Gastrocnemius medialis (tissue), 4 donors: ENCODE measurements at regions of chr5 and their contacts with region 1.

Region 1: DNA sequence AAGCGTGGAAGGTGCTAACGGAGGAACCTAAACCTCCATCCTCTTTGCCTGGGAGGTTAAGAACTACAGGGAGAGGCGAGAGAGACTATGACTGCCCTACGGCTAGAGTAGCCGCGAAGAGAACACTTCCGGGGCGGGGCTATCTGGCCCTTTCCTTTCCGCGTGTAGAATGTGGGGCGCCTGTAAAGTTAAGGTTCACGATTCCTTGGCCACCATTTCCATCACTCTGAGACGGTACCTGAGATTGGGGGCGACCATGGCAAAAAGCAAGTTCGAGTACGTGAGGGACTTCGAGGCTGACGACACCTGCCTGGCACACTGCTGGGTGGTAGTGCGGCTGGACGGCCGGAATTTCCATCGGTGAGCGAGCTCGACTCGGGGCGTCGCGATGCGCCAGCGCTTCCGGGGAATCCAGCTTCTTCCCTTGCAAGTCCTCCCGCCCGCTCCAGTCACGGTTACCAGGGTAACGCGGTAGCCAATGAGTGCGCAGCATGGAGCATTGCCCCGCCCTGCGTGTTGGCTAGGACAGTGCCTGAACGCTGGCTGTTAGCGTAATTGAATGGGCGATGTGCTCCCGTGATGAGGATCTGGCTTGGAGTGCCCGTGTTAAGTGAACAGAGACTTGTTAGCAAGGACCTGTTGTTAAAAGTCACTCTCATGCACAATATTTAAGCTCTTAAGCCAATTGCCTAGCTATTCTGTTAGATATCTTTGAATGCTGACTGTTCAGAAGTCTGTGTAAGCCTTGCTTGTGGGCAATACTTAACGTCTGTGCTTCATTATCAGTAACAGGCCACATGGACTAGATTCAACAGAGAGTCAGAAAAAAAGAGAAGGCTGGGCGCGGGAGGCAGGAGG is at the start of gene THG1L:
- DNase-seq: peak; percentile 96 to 97
- ATAC-seq: peak; percentile 99
- H3K4me3 ChIP-seq: peak within 1 kb of the TSS; percentile 71 to 97 (median 89)
- H3K27ac ChIP-seq: peak within 1 kb of the TSS; percentile 83 to 97 (median 94)
- H3K4me1 ChIP-seq: peaks cover 0 to 6% of the 10 kb centered on the region in 2 donors
- H3K27me3 ChIP-seq: no peaks in the 10 kb centered on the region
- CTCF ChIP-seq: no peak
- POLR2A ChIP-seq: peak; percentile 35 to 43
- total RNA-seq, gene THG1L: 3.5 to 9.7 (median 6.6) TPM

Region 2: DNA sequence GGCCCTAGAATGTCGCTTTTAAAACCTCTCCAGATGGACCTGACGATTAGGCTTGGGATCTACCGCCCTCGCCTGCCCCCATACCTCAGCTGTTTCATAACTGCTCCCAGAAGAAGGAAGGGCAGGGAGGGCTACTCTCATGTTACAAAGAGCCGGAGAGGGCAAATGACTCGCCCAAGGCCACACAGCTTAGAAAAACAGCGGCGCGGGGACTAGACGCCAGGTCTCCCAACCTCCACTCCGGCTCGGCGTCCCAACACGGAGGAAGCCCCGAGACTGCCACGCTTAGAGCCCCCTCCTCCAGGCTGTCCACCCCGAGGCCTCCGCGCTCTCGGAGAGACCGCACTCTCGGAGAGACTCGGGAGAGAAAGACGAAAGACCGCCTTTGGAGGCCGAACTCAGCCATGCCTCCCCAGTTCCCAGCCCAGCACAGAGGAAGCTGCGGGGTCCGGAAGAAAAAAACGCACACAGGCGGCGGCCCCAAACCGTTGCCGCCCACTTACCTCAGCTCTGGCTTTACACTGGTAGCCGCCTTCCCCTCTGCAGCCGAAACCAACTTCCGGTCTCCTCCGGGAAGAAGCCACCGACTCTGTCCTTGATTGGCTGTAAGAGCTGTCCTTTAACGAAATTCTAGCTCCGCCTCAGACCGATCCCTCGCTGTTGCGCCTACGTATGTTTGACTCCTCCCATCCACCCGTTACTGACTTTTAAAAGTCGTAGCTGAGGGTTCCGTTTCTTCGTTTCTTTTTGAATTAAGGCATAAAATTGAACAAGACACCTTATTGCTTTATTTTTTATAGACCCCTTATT is 589.0 kb before region 1 on chr5 and contains the start of gene MED7:
- in situ Hi-C with region 1: loop called in 3 of 4 experiments (anchors 10 to 25 kb)
- intact Hi-C with region 1: no loop called
- DNase-seq: peak; percentile 95
- ATAC-seq: peak; percentile 98 to 100
- H3K4me3 ChIP-seq: peak within 1 kb of the TSS; percentile 68 to 96 (median 86)
- H3K27ac ChIP-seq: peak within 1 kb of the TSS; percentile 83 to 90 (median 89)
- H3K4me1 ChIP-seq: peaks cover 10% of the 10 kb centered on the region in 2 donors
- H3K27me3 ChIP-seq: no peaks in the 10 kb centered on the region
- CTCF ChIP-seq: no peak
- POLR2A ChIP-seq: peak; percentile 57 to 76
- total RNA-seq, gene MED7: 7.0 to 9.4 (median 8.5) TPM

Region 3: DNA sequence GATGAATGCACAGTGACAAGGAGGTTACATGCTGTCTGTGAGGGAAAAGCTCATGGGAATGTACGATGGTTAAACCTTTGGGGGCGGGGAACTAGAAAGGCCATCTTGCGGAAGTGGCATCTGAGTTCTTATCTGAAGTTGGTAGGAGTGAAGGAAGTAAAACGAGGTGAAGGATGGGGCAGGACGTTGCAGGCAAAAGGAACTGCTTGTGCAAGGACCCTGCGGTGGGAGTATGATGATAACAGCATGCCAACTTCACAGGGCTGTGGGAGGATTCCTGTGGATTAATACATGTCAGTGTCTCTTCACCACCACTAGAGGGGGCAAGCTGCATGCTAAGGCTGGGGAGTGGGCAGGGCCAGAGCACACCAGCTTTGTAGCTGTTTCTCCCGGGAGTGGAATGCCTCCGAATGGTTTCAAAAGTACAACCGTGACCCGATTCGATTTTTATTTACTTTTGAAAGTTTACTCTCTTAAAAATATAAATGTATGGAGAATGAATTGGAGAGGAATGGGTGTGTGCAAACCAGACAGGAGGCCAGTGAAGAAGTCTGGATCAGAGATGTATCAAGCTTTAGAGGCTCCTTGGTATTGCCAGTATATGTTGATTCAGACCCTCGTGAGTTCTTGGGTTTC is 403.1 kb before region 1 on chr5:
- in situ Hi-C with region 1: loop called in 1 of 4 experiments (anchors 10 kb)
- intact Hi-C with region 1: no loop called
- DNase-seq: peak; percentile 47 to 48
- ATAC-seq: peak; percentile 90 to 98
- H3K4me3 ChIP-seq: peak overlapping the region in 1 of 4 donors; percentile 7
- H3K27ac ChIP-seq: no peak overlapping the region
- H3K4me1 ChIP-seq: no peaks in the 10 kb centered on the region
- H3K27me3 ChIP-seq: no peaks in the 10 kb centered on the region
- CTCF ChIP-seq: peak; percentile 73 to 92 (median 79)
- POLR2A ChIP-seq: no peak

Region 4: DNA sequence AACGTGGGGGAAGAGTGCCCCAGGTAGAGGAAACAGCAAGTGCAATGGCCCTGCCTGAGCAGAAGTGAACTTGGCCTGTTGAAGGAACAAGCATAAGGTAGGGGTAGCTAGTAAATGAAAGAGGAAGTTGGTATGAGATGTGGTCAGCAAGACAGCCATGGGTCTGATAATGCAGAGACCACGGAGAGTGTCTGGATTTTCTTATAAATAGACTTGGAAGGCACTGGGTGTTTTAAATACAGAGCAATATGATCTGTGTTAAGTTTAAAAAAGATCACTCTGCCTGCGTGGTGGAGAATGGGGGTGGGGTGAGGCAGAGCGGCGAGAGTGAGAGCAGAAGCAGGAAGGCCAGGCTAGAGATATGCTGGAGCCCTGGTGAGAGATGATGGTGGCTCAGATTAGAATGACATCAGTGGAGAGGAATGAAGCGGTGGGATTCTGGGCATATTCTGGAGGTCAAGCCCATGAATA is 160.1 kb before region 1 on chr5:
- in situ Hi-C with region 1: no loop called
- intact Hi-C with region 1: loop called (anchors 5 kb)
- DNase-seq: peak in 1 of 2 donors; percentile 39
- ATAC-seq: peak; percentile 43 to 60
- H3K4me3 ChIP-seq: peak overlapping the region in 3 of 4 donors; percentile 7 to 19 (median 7)
- H3K27ac ChIP-seq: peak overlapping the region; percentile 34 to 67 (median 60)
- H3K4me1 ChIP-seq: peaks cover 44 to 52% of the 10 kb centered on the region in 2 donors
- H3K27me3 ChIP-seq: no peaks in the 10 kb centered on the region
- CTCF ChIP-seq: no peak
- POLR2A ChIP-seq: no peak

Region 5: GRCh38 chr5:157743163-157744050 is 11.9 kb after region 1 on chr5 and contains the start of gene LSM11:
- in situ Hi-C with region 1: no loop called
- intact Hi-C with region 1: loop called (anchors 1 kb)
- DNase-seq: peak; percentile 65 to 78
- ATAC-seq: peak; percentile 94
- H3K4me3 ChIP-seq: peak within 1 kb of the TSS; percentile 67 to 91 (median 72)
- H3K27ac ChIP-seq: peak within 1 kb of the TSS in 2 of 4 donors; percentile 46 to 58
- H3K4me1 ChIP-seq: peaks cover 10 to 14% of the 10 kb centered on the region in 2 donors
- H3K27me3 ChIP-seq: no peaks in the 10 kb centered on the region
- CTCF ChIP-seq: peak; percentile 87 to 100 (median 95)
- POLR2A ChIP-seq: no peak
- total RNA-seq, gene LSM11: 0.95 to 1.9 (median 1.2) TPM

Region 6: GRCh38 chr5:157778121-157778805 is 46.8 kb after region 1 on chr5:
- in situ Hi-C with region 1: no loop called
- intact Hi-C with region 1: no loop called
- DNase-seq: no peak
- ATAC-seq: no peak
- H3K4me3 ChIP-seq: no peak overlapping the region
- H3K27ac ChIP-seq: no peak overlapping the region
- H3K4me1 ChIP-seq: no peaks in the 10 kb centered on the region
- H3K27me3 ChIP-seq: no peaks in the 10 kb centered on the region
- CTCF ChIP-seq: no peak
- POLR2A ChIP-seq: no peak

Region 7: DNA sequence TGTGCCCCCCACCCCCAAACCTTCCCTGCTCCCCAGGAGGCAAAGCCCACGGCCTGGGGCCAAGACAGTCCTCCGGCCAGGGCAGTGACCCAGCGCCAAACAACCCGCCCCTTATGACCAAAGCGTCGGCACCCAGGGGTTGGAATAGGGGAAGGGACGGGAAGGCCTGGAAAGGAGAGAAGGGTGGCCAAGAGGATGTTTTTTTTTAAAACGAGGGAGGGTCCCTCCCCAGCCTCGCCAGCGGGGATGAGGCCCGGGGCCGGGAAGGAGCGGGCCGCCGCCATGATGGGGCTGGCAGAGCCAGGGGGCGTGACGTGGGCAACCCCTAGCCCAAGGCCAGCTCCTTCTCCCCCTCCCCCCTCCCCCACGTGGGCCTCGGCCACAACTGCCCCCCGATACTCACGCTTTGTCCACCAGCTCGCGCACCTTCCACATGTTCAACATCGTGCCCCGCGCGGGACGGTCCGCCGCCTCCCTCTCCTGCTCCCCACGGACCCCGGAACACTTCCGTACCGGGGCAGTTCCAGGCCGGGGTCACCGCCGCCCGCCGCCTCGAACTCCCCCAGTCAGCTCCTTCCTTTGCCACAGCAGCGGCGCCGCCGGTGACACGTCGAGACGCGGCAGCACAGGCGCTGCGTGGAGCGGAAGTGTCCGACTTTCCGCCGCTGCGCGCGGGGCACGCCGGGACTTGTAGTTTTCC is 127.2 kb after region 1 on chr5 and contains the start of gene CLINT1:
- in situ Hi-C with region 1: no loop called
- intact Hi-C with region 1: loop called (anchors 2 kb)
- DNase-seq: peak; percentile 83 to 87
- ATAC-seq: peak; percentile 94
- H3K4me3 ChIP-seq: peak within 1 kb of the TSS; percentile 83 to 98 (median 94)
- H3K27ac ChIP-seq: peak within 1 kb of the TSS; percentile 93 to 97 (median 96)
- H3K4me1 ChIP-seq: peaks cover 16 to 23% of the 10 kb centered on the region in 2 donors
- H3K27me3 ChIP-seq: no peaks in the 10 kb centered on the region
- CTCF ChIP-seq: no peak
- POLR2A ChIP-seq: peak; percentile 70 to 71
- total RNA-seq, gene CLINT1: 77.4 to 124 (median 85.5) TPM